Psoas muscle (tissue), 8 donors: ENCODE measurements at regions of chr14 and their contacts with region 1.

Region 1: DNA sequence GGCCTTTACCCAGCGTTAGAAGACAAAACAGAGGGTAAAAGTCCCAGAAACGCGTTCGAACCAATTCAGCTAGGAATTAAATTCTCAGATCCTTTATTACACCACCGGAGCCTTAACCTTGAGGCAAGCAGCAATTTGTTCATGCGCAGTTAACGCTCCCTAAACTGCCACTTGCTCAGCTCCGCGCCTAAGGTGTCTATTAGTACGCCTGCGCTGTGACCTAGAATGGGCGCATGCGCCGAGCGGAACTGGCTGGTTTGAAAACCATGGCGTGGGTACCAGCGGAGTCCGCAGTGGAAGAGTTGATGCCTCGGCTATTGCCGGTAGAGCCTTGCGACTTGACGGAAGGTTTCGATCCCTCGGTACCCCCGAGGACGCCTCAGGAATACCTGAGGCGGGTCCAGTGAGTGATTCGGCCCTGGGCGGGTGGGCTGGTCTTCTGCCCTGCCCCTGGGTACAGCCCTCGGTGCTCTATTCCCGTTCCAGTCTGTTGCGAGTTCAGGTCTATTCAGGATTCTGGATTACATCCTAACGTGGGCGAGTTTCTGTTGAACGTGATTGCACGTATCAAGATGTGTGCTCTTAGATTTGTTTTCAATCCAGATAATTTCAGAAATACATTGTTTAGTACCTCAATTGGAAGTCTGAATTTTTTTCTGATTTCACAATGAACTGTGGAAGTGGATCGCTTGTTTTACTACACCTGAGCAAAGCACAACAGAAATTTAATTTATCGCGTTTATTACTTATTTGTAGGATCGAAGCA is at the start of gene GEMIN2:
- DNase-seq: peak; percentile 92 to 96
- ATAC-seq: peak; percentile 98 to 100 (median 100)
- H3K4me3 ChIP-seq: peak within 1 kb of the TSS; percentile 84
- H3K27ac ChIP-seq: peak within 1 kb of the TSS; percentile 84
- H3K4me1 ChIP-seq: peaks cover 6% of the 10 kb centered on the region
- H3K27me3 ChIP-seq: no peaks in the 10 kb centered on the region
- CTCF ChIP-seq: no peak
- total RNA-seq, gene GEMIN2: 9.7 to 11.7 (median 10.8) TPM

Region 2: GRCh38 chr14:39169541-39169900 is 55.3 kb after region 1 on chr14:
- intact Hi-C with region 1: loop called in 1 of 2 experiments (anchors 5 kb)
- DNase-seq: no peak
- ATAC-seq: peak in 3 of 4 donors; percentile 34 to 59 (median 56)
- H3K4me3 ChIP-seq: peak overlapping the region; percentile 86
- H3K27ac ChIP-seq: peak overlapping the region; percentile 95
- H3K4me1 ChIP-seq: peaks cover 25% of the 10 kb centered on the region
- H3K27me3 ChIP-seq: no peaks in the 10 kb centered on the region
- CTCF ChIP-seq: no peak

Region 3: DNA sequence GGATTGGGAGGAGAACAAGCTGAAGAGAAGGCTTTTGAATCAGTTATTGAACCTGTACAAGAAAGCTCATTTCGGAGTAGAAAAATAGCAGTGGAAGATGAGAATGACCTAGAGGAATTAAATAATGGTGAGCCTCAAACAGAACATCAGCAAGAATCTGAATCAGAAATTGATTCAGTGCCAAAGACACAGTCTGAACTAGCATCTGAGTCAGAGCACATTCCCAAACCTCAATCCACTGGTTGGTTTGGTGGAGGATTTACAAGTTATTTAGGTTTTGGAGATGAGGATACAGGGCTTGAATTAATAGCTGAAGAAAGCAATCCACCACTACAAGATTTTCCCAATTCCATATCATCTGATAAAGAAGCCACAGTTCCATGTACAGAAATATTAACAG is 133.0 kb after region 1 on chr14:
- intact Hi-C with region 1: no loop called
- DNase-seq: no peak
- ATAC-seq: no peak
- H3K4me3 ChIP-seq: no peak overlapping the region
- H3K27ac ChIP-seq: no peak overlapping the region
- H3K4me1 ChIP-seq: no peaks in the 10 kb centered on the region
- H3K27me3 ChIP-seq: no peaks in the 10 kb centered on the region
- CTCF ChIP-seq: no peak

Region 4: GRCh38 chr14:39339003-39339402 is 224.7 kb after region 1 on chr14:
- intact Hi-C with region 1: no loop called
- DNase-seq: no peak
- ATAC-seq: no peak
- H3K4me3 ChIP-seq: no peak overlapping the region
- H3K27ac ChIP-seq: no peak overlapping the region
- H3K4me1 ChIP-seq: no peaks in the 10 kb centered on the region
- H3K27me3 ChIP-seq: no peaks in the 10 kb centered on the region
- CTCF ChIP-seq: no peak